ENCODE measurements at regions of chr5 and their contacts with region 1.

Region 1: GRCh38 chr5:54310433-54311175 is at the start of gene ARL15:
- DNase-seq: peak; percentile 95 to 99 (median 98)
- ATAC-seq: peak; percentile 96
- H3K4me3 ChIP-seq: peak within 1 kb of the TSS; percentile 96
- H3K4me3 Mint-ChIP-seq: peak within 1 kb of the TSS; percentile 85 to 98 (median 94)
- H3K27ac ChIP-seq: peak within 1 kb of the TSS; percentile 78
- H3K27ac Mint-ChIP-seq: peak within 1 kb of the TSS; percentile 84 to 98 (median 95)
- H3K4me1 ChIP-seq: peaks cover 0 to 7% of the 10 kb centered on the region in 2 donors
- H3K4me1 Mint-ChIP-seq: peaks cover 12 to 36% (median 27%) of the 10 kb centered on the region in 7 donors
- H3K27me3 ChIP-seq: no peaks in the 10 kb centered on the region
- H3K27me3 Mint-ChIP-seq: peaks cover 0 to 28% (median 5%) of the 10 kb centered on the region in 5 donors
- total RNA-seq, gene ARL15: 9.6 to 15.6 (median 13.6) TPM

Region 2: GRCh38 chr5:52948418-52949076 is 1362.1 kb before region 1 on chr5:
- CTCF ChIA-PET with region 1: no interaction called
- POLR2A ChIA-PET with region 1: no interaction called
- intact Hi-C with region 1: loop called in 1 of 2 experiments (anchors 5 kb)
- DNase-seq: peak; percentile 7 to 76 (median 59)
- ATAC-seq: peak; percentile 99
- H3K4me3 ChIP-seq: no peak overlapping the region
- H3K4me3 Mint-ChIP-seq: no peak overlapping the region
- H3K27ac ChIP-seq: no peak overlapping the region
- H3K27ac Mint-ChIP-seq: peak overlapping the region in 2 of 9 donors; percentile 7 to 18
- H3K4me1 ChIP-seq: no peaks in the 10 kb centered on the region
- H3K4me1 Mint-ChIP-seq: peaks cover 4 to 29% (median 16%) of the 10 kb centered on the region in 7 donors
- H3K27me3 ChIP-seq: no peaks in the 10 kb centered on the region
- H3K27me3 Mint-ChIP-seq: peaks cover 0 to 4% (median 0%) of the 10 kb centered on the region in 5 donors

Region 3: DNA sequence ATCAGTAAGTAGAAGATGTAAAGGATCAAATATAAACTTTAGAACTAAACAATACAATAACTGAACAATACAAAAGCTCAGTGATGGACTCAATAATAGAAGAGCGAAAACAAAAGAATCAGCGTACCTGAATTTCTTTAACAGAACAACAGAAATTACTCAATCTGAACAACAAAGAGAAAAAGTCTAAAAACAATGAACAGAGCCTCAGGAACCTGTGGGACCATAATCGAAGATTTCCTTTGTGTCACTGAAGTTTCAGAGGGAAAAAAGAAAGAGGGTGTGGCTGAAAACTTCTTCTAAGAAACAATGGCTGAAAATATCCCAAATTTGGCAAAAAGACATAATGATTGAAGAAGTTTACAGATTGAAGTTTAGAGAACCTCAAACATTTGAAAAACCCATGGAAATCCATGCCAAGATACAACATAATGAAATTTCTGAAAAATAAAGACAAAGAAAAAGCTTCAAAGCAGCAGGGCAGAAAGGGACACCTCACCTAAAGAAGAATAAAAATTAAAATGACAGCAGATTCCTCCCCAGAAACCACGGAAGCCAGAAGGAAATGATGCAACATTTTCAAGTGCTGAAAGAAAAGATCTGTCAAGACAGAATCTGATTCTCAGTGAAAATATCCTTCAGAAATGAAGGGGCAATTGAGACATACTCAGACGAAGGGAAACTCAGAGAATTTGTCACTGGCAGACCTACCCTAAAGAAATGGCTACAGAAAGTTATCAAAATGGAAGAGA is 289.0 kb before region 1 on chr5:
- CTCF ChIA-PET with region 1: no interaction called
- POLR2A ChIA-PET with region 1: no interaction called
- intact Hi-C with region 1: loop called in 1 of 2 experiments (anchors 5 kb)
- DNase-seq: no peak
- ATAC-seq: no peak
- H3K4me3 ChIP-seq: no peak overlapping the region
- H3K4me3 Mint-ChIP-seq: peak overlapping the region in 9 of 10 donors; percentile 4 to 90 (median 40)
- H3K27ac ChIP-seq: no peak overlapping the region
- H3K27ac Mint-ChIP-seq: peak overlapping the region in 7 of 9 donors; percentile 20 to 85 (median 29)
- H3K4me1 ChIP-seq: peaks cover 0 to 8% of the 10 kb centered on the region in 2 donors
- H3K4me1 Mint-ChIP-seq: peaks cover 28 to 34% (median 31%) of the 10 kb centered on the region in 7 donors
- H3K27me3 ChIP-seq: no peaks in the 10 kb centered on the region
- H3K27me3 Mint-ChIP-seq: no peaks in the 10 kb centered on the region

Region 4: GRCh38 chr5:54457094-54457862 is 146.7 kb after region 1 on chr5:
- CTCF ChIA-PET with region 1: no interaction called
- POLR2A ChIA-PET with region 1: no interaction called
- intact Hi-C with region 1: no loop called
- DNase-seq: no peak
- ATAC-seq: no peak
- H3K4me3 ChIP-seq: no peak overlapping the region
- H3K4me3 Mint-ChIP-seq: no peak overlapping the region
- H3K27ac ChIP-seq: no peak overlapping the region
- H3K27ac Mint-ChIP-seq: no peak overlapping the region
- H3K4me1 ChIP-seq: no peaks in the 10 kb centered on the region
- H3K4me1 Mint-ChIP-seq: no peaks in the 10 kb centered on the region
- H3K27me3 ChIP-seq: no peaks in the 10 kb centered on the region
- H3K27me3 Mint-ChIP-seq: peaks cover 3 to 36% (median 19%) of the 10 kb centered on the region in 5 donors

Region 5: DNA sequence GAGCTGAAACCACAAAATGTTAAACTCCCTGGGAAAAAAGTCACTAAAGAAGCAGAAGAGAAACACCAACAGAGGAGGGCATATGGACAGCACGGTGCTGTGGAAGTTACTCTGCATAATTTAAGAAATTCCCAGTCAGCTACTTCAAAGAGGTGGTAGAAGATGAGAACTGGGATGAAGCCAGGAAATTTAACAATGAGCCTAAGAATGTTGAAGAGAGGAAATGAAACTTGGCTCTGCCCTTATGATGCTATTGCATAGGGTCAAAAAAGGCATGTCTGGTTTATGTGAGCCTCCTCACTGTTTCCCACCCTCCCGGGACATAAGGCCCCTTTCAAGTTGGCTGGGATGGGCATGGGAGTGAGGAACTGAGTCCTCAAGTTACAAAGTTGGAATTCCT is 181.6 kb after region 1 on chr5:
- CTCF ChIA-PET with region 1: interaction called, 4 read pairs
- POLR2A ChIA-PET with region 1: interaction called, 3 read pairs
- intact Hi-C with region 1: loop called (anchors 1 to 5 kb)
- DNase-seq: no peak
- ATAC-seq: no peak
- H3K4me3 ChIP-seq: no peak overlapping the region
- H3K4me3 Mint-ChIP-seq: no peak overlapping the region
- H3K27ac ChIP-seq: no peak overlapping the region
- H3K27ac Mint-ChIP-seq: no peak overlapping the region
- H3K4me1 ChIP-seq: no peaks in the 10 kb centered on the region
- H3K4me1 Mint-ChIP-seq: no peaks in the 10 kb centered on the region
- H3K27me3 ChIP-seq: no peaks in the 10 kb centered on the region
- H3K27me3 Mint-ChIP-seq: peaks cover 0 to 19% (median 4%) of the 10 kb centered on the region in 5 donors

Region 6: DNA sequence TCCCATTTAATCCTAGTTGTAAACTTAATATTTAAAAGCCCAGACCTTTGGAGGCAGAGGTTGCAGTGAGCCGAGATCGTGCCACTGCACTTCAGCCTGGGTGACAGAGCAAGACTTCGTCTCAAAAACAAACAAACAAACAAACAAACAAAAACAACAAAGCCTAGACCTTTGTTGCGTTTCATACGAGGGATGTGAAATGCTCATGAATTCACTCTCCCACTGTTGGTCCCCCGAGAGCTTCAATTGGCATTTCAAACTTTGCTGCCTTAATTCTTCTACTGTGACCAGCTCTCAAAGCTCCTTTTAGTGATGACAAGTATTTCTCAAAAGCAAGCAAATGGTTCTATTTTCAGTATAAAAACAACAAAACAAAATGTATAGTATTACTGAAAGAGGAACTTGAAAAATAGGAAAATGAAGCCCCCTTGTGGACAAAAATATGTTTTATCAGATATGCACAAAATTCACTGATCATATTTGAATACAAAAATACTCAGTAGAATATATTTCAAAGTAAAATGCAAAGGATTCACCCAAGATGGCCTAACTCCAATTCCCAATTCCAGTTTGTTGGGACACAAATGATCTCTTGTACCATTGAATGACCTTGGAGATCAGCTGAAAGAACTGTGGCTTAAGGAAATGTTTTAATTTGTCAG is 534.4 kb after region 1 on chr5:
- CTCF ChIA-PET with region 1: no interaction called
- POLR2A ChIA-PET with region 1: no interaction called
- intact Hi-C with region 1: loop called in 1 of 2 experiments (anchors 2 kb)
- DNase-seq: peak in 6 of 9 donors; percentile 38 to 67 (median 60)
- ATAC-seq: peak; percentile 34
- H3K4me3 ChIP-seq: no peak overlapping the region
- H3K4me3 Mint-ChIP-seq: peak overlapping the region in 7 of 10 donors; percentile 2 to 68 (median 52)
- H3K27ac ChIP-seq: no peak overlapping the region
- H3K27ac Mint-ChIP-seq: peak overlapping the region in 6 of 9 donors; percentile 45 to 63 (median 56)
- H3K4me1 ChIP-seq: no peaks in the 10 kb centered on the region
- H3K4me1 Mint-ChIP-seq: peaks cover 0 to 21% (median 5%) of the 10 kb centered on the region in 7 donors
- H3K27me3 ChIP-seq: no peaks in the 10 kb centered on the region
- H3K27me3 Mint-ChIP-seq: peaks cover 8 to 18% (median 12%) of the 10 kb centered on the region in 5 donors

Region 7: GRCh38 chr5:55307383-55308253 is 997.0 kb after region 1 on chr5 and contains the starts of genes DHX29 and MTREX:
- CTCF ChIA-PET with region 1: no interaction called
- POLR2A ChIA-PET with region 1: no interaction called
- intact Hi-C with region 1: loop called in 1 of 2 experiments (anchors 5 kb)
- DNase-seq: peak; percentile 85 to 93 (median 91)
- ATAC-seq: peak; percentile 94
- H3K4me3 ChIP-seq: peak within 1 kb of the TSS; percentile 97
- H3K4me3 Mint-ChIP-seq: no peak within 1 kb of the TSS
- H3K27ac ChIP-seq: peak within 1 kb of the TSS; percentile 89
- H3K27ac Mint-ChIP-seq: no peak within 1 kb of the TSS
- H3K4me1 ChIP-seq: peaks cover 28 to 33% of the 10 kb centered on the region in 2 donors
- H3K4me1 Mint-ChIP-seq: peaks cover 15 to 34% (median 21%) of the 10 kb centered on the region in 7 donors
- H3K27me3 ChIP-seq: no peaks in the 10 kb centered on the region
- H3K27me3 Mint-ChIP-seq: no peaks in the 10 kb centered on the region
- total RNA-seq, gene DHX29: 12.5 to 19.2 (median 15.9) TPM
- total RNA-seq, gene MTREX: 64.0 to 83.7 (median 66.3) TPM